Endothelial cell of umbilical vein (primary cell): ENCODE measurements at regions of chr3 and their contacts with region 1.

Region 1: GRCh38 chr3:59212128-59212779 is 162.4 kb upstream of the CFAP20DC start:
- DNase-seq: peak; percentile 44
- H3K4me3 ChIP-seq: no peak overlapping the region
- H3K27ac ChIP-seq: no peak overlapping the region
- H3K4me1 ChIP-seq: peaks cover 9% of the 10 kb centered on the region
- H3K27me3 ChIP-seq: peaks cover 3 to 8% of the 10 kb centered on the region in 2 experiments
- CTCF ChIP-seq: peak; percentile 36 to 41
- POLR2A ChIP-seq: no peak

Region 2: DNA sequence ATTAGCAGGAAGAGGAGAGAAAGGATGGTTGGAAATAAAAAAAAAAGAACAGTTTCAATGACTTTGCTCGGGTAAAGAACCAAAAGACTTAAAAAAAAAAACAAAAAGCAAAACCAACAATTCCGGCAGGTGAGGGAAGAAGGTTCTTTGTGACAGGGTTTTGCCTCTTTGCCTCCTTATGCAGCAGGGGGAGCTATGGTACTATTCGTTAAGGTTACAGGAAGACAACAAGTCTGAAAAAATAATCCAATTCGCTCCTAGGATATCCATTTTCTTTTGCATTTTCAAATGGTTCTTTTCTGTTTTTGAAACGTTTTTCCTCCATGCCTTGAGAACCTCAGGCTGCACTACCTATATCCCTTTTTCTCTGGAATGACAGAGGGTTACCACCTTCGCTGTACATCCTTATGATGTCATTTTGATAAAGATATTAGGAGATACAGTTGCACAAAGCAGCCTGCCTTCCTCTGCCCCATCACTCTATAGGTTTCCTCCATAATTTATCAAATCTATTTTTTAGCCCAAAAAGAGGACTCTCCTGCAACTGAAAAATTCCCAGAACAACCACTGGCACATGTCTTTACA is 217.4 kb before region 1 on chr3:
- CTCF ChIA-PET with region 1: no interaction called
- POLR2A ChIA-PET with region 1: no interaction called
- dilution Hi-C with region 1: no loop called
- intact Hi-C with region 1: loop called (anchors 1 kb)
- DNase-seq: peak; percentile 60
- H3K4me3 ChIP-seq: no peak overlapping the region
- H3K27ac ChIP-seq: no peak overlapping the region
- H3K4me1 ChIP-seq: peaks cover 19% of the 10 kb centered on the region
- H3K27me3 ChIP-seq: no peaks in the 10 kb centered on the region
- CTCF ChIP-seq: peak; percentile 59 to 71
- POLR2A ChIP-seq: no peak

Region 3: GRCh38 chr3:59326246-59327024 is 114.2 kb after region 1 on chr3:
- CTCF ChIA-PET with region 1: no interaction called
- POLR2A ChIA-PET with region 1: no interaction called
- dilution Hi-C with region 1: no loop called
- intact Hi-C with region 1: loop called (anchors 1 kb)
- DNase-seq: no peak
- H3K4me3 ChIP-seq: no peak overlapping the region
- H3K27ac ChIP-seq: no peak overlapping the region
- H3K4me1 ChIP-seq: no peaks in the 10 kb centered on the region
- H3K27me3 ChIP-seq: no peaks in the 10 kb centered on the region
- CTCF ChIP-seq: peak; percentile 28 to 41
- POLR2A ChIP-seq: no peak

Region 4: DNA sequence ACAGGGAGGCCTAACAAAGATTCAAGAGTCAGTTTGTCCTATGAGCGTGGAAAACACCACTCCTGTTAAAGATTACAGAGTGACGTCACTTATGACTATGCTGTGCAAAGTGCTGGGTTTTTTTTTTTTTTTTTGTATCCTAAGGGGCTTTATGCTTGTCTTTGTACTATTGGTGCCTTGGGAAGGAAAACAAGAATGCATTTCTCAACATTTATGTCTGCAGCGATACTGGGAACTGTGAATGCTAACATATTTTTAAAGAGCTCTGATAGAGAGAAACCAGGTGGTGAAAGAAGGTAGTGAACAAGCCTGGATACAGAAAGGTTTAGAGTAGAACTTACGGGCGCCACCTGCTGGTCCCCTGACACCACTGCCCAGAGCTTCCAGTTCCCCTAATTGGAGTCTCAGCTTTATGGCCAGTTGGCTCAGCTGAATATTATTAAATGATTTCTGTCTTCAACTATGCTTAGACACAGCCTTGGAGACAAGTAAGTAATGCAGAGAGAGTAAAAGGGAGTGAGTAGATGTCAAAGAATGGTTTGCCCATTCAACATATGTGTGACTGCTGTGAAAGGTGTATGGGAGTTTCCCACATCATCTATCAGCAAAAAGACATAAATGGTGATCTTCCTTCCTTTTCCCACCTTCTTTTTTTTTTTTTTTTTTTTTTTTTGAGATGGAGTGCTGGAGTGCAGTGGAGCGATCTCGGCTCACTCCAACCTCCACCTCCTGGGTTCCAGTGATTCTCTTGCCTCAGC is 645.5 kb after region 1 on chr3:
- CTCF ChIA-PET with region 1: interaction called, 8 read pairs
- POLR2A ChIA-PET with region 1: no interaction called
- dilution Hi-C with region 1: no loop called
- intact Hi-C with region 1: loop called (anchors 1 kb)
- DNase-seq: peak; percentile 58
- H3K4me3 ChIP-seq: no peak overlapping the region
- H3K27ac ChIP-seq: no peak overlapping the region
- H3K4me1 ChIP-seq: no peaks in the 10 kb centered on the region
- H3K27me3 ChIP-seq: no peaks in the 10 kb centered on the region
- CTCF ChIP-seq: peak; percentile 79 to 89
- POLR2A ChIP-seq: no peak